AG04449 (cell line): ENCODE measurements at regions of chr20 and their contacts with region 1.

Region 1: GRCh38 chr20:10090588-10091166 is 55.9 kb downstream of the ANKEF1 start:
- DNase-seq: no peak
- H3K4me3 ChIP-seq: no peak overlapping the region
- CTCF ChIP-seq: peak; percentile 76

Region 2: GRCh38 chr20:9756660-9757059 is 334.0 kb before region 1 on chr20:
- CTCF ChIA-PET with region 1: no interaction called
- POLR2A ChIA-PET with region 1: no interaction called
- DNase-seq: no peak
- H3K4me3 ChIP-seq: no peak overlapping the region
- CTCF ChIP-seq: no peak

Region 3: DNA sequence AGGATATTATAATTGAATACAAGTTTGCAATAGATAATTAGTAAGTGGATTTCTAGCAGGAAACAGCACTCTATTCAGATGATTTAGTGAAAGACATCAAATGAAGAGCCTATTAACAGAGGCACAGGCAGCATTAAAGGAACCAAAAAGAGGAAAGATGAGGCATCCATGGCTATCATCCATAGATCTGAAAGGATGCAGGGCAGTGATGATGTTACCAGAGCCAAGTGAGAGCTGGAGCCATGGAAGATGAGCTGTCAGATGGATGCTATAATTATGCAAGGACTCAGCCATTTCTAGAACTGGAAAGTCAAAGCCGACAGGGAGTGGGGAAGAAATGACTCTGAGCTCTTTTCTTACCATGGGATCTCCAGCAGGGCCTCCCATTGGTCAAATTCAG is 122.7 kb before region 1 on chr20:
- CTCF ChIA-PET with region 1: interaction called, 21 read pairs
- POLR2A ChIA-PET with region 1: no interaction called
- DNase-seq: no peak
- H3K4me3 ChIP-seq: no peak overlapping the region
- CTCF ChIP-seq: no peak

Region 4: GRCh38 chr20:9989066-9989724 is 101.5 kb before region 1 on chr20:
- CTCF ChIA-PET with region 1: interaction called, 250 read pairs
- POLR2A ChIA-PET with region 1: no interaction called
- DNase-seq: no peak
- H3K4me3 ChIP-seq: no peak overlapping the region
- CTCF ChIP-seq: no peak

Region 5: GRCh38 chr20:10077081-10077471 is 13.6 kb before region 1 on chr20:
- CTCF ChIA-PET with region 1: interaction called, 67 read pairs
- POLR2A ChIA-PET with region 1: no interaction called
- DNase-seq: no peak
- H3K4me3 ChIP-seq: no peak overlapping the region
- CTCF ChIP-seq: peak; percentile 8

Region 6: DNA sequence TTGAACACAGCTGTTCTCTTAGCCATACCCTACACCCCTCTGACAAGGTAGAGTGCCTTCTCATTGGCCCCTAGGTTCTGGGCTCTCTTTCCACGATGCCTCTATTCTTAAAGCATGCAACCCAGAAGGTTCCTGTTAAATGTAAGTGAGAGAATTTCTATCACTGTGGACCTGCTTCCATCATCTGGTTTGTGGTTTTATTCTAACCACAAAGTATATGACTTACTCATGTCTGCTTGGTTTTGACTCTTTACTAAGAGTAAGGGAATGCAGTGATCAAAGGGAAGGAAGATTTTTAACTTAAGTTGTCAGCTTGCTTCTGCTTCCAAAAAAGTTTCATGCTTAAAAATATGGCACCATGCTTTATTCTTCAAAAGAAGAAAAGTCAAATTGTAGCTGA is 24.3 kb after region 1 on chr20:
- CTCF ChIA-PET with region 1: interaction called, 20 read pairs
- POLR2A ChIA-PET with region 1: interaction called, 4 read pairs
- DNase-seq: peak; percentile 21
- H3K4me3 ChIP-seq: no peak overlapping the region
- CTCF ChIP-seq: no peak